ENCODE measurements at regions of chrX and their contacts with region 1.

Region 1: DNA sequence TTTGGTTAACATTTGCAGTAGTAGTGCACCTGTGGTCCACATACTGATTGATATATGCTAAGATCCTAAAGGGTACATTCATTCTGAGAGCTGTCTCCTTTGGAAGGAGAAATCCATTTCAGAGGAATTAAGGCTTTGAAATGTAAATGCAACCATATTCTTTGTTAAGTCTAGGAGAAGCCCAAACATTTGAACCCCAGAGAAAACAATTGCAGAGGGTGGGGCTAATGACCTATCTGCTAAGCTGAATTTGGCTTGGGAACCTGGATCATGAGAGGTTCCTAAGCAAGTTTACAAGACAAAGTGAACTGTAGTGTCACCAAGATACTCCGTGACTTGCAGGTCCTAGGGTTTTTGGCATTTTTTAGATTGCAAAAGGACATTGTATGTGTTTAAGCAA is 41.2 kb downstream of the LAS1L start:
- DNase-seq: no peak
- H3K4me3 ChIP-seq: no peak overlapping the region
- H3K27ac ChIP-seq: no peak overlapping the region
- H3K4me1 ChIP-seq: no peaks in the 10 kb centered on the region
- H3K27me3 ChIP-seq: no peaks in the 10 kb centered on the region
- CTCF ChIP-seq: no peak

Region 2: DNA sequence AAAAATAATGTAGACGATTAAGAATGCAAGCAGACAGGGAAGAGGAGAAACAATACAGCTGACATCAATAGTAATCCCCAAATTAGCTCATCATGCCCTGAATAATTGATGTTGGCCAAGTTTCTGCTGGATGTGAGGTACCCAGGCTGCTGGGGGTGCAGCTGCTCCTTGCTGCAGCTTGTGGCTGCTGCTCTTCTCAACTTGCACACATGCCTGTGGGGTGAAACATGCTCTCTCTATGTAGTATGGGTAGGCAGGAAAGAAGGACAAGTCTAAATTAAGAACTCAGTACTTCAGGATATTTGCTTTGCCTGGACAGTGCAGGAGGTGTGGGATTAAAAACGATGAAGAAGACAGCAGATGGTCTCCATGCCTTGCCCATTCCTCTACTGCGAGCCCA is 1128.8 kb after region 1 on chrX:
- intact Hi-C with region 1: loop called (anchors 5 kb)
- DNase-seq: no peak
- H3K4me3 ChIP-seq: no peak overlapping the region
- H3K27ac ChIP-seq: no peak overlapping the region
- H3K4me1 ChIP-seq: no peaks in the 10 kb centered on the region
- H3K27me3 ChIP-seq: no peaks in the 10 kb centered on the region
- CTCF ChIP-seq: no peak